ENCODE measurements at regions of chr17 and their contacts with region 1.

Region 1: GRCh38 chr17:45177563-45178169 is 16.0 kb downstream of the HEXIM2 start:
- DNase-seq: no peak
- ATAC-seq: no peak
- H3K4me3 ChIP-seq: no peak overlapping the region
- H3K27ac ChIP-seq: no peak overlapping the region
- H3K4me1 ChIP-seq: peaks cover 19 to 23% of the 10 kb centered on the region in 2 donors
- H3K27me3 ChIP-seq: no peaks in the 10 kb centered on the region
- CTCF ChIP-seq: no peak
- POLR2A ChIP-seq: no peak

Region 2: DNA sequence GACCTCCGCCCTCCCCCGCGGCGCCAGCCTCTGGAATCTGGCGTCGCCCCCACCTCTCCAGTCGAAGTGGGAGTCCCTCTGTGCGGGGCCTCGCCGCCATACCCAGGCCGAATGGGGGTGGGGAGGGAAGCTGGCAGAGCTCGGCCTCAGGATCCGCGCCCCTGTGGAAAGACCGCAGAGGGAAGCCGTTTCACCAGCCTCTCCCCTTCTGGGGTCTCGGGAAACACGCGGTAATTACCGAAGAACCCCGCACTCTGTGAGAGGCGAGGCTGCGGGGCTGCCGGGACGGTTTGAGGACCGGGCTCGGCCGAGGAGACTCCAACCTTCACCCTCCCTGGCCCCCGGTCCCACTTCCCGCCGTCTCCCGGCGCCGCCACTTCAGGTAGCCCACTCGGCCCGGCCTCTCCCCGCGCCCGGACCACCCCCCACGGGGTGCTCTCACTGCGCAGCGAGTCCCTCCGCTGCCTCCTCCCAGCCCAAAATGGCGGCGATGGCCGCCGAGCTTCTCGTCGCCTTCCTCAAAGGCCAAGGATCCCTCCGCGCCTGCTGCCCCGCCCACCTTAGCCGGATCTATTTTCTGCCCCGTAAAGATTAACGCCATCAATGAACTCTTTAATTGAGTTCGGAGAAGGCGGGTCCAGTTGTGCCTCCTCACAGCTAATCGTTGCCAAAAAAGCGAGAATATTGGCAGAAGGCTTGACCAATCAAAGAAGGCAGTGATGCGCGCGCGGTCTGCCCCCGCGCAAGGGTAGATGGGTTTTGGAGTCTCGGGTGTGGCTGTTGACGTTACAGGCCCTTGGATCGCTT is 16.4 kb before region 1 on chr17:
- in situ Hi-C with region 1: no loop called
- intact Hi-C with region 1: no loop called
- DNase-seq: peak; percentile 98 to 99
- ATAC-seq: peak; percentile 94 to 98
- H3K4me3 ChIP-seq: peak overlapping the region; percentile 85 to 99 (median 92)
- H3K27ac ChIP-seq: peak overlapping the region; percentile 96 to 100 (median 100)
- H3K4me1 ChIP-seq: peaks cover 38 to 45% of the 10 kb centered on the region in 2 donors
- H3K27me3 ChIP-seq: no peaks in the 10 kb centered on the region
- CTCF ChIP-seq: peak in 2 of 5 experiments; percentile 25 to 40
- POLR2A ChIP-seq: peak; percentile 94 to 95

Region 3: DNA sequence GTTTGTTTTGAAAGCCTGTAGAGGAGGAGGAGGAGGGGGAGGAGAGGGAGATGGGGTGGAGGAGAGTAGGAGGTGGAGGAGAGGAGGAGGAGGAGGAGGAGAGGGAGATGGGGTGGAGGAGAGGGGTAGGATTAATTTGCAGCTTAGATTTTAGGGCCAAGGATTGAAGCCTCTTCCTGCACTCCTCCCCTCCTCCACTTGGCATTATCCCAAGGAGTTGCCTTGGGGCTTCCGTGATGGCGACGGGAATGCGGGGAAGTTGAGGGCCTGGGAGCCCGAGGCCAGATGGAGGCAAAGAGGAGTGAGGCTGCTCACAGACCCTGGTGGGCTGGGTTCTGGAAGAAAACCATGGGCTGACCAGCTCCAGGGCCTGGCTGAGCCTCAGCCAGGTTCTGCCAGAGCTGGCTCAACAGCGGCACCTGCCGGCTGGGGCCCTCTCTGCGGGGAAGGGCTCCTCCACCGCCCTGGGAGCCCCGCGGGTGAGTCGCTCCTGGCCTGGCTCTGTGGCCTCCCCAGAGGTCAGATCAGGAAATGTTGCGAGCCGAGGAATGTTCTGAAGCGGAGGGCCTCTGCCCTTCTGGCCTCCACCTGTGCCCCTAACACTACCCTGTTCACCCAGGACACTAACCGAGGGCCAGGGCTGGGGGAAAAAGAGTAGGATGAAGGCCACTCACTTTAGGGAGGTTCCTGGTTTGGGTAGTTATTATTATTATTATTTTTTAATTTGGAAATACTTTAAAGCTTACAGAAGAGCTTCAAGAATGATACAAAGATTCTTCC is 20.1 kb after region 1 on chr17:
- in situ Hi-C with region 1: no loop called
- intact Hi-C with region 1: loop called (anchors 2 kb)
- DNase-seq: peak; percentile 84 to 90
- ATAC-seq: peak; percentile 88
- H3K4me3 ChIP-seq: no peak overlapping the region
- H3K27ac ChIP-seq: peak overlapping the region; percentile 60 to 65 (median 63)
- H3K4me1 ChIP-seq: peaks cover 5 to 6% of the 10 kb centered on the region in 2 donors
- H3K27me3 ChIP-seq: no peaks in the 10 kb centered on the region
- CTCF ChIP-seq: peak; percentile 99 to 100 (median 99)
- POLR2A ChIP-seq: no peak

Region 4: DNA sequence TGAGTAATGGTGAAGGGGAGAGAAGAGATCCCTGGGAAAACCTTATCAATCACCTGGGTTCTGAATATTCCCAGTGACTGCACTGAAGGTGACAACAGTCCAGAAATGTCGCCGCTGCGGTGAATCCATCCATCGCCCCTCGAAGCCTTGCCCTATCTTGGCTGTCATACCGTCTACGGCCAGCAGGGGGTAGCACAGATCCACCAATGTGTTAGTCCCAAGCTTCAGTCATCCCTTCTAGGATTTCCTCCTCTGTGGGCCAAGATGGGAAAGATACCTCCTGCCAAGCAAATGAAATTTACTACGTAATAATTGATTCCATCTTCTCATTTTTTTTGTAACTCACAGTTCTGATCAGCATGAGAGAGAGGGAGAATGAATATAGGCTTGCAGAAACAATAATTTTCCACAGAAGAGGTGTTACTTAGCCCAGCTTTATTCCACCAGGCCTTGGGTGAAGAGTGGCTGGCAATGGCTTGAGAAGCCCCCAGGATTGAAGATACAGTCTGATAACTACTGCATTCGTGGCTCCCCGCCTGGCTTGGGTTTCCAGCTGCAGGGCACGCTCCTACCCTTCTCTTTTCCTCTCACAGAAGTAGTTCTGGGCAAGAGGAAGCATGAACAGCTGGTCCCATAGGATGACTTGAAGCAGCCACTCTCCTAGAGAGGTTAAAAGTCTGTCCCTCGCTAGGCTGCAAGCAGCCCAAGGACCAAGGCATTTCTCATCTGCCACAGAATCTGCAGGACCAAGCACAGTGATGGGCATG is 41.4 kb after region 1 on chr17:
- in situ Hi-C with region 1: no loop called
- intact Hi-C with region 1: no loop called
- DNase-seq: peak; percentile 60 to 76
- ATAC-seq: peak; percentile 83 to 92
- H3K4me3 ChIP-seq: no peak overlapping the region
- H3K27ac ChIP-seq: no peak overlapping the region
- H3K4me1 ChIP-seq: peaks cover 0 to 4% of the 10 kb centered on the region in 2 donors
- H3K27me3 ChIP-seq: peaks cover 0 to 4% (median 0%) of the 10 kb centered on the region in 3 donors
- CTCF ChIP-seq: peak; percentile 89 to 99 (median 95)
- POLR2A ChIP-seq: no peak

Region 5: GRCh38 chr17:45231213-45232116 is 53.8 kb after region 1 on chr17:
- in situ Hi-C with region 1: no loop called
- intact Hi-C with region 1: no loop called
- DNase-seq: no peak
- ATAC-seq: no peak
- H3K4me3 ChIP-seq: no peak overlapping the region
- H3K27ac ChIP-seq: peak overlapping the region in 1 of 4 donors; percentile 73
- H3K4me1 ChIP-seq: peaks cover 28 to 33% of the 10 kb centered on the region in 2 donors
- H3K27me3 ChIP-seq: no peaks in the 10 kb centered on the region
- CTCF ChIP-seq: peak in 1 of 5 experiments; percentile 14
- POLR2A ChIP-seq: no peak